ENCODE measurements at regions of chr3 and their contacts with region 1.

Region 1: GRCh38 chr3:30751610-30752299 is 142.7 kb downstream of the GADL1 start:
- DNase-seq: peak in 1 of 2 donors; percentile 73
- ATAC-seq: peak in 2 of 3 donors; percentile 36 to 68
- H3K4me3 ChIP-seq: no peak overlapping the region
- H3K4me3 Mint-ChIP-seq: no peak overlapping the region
- H3K27ac ChIP-seq: no peak overlapping the region
- H3K27ac Mint-ChIP-seq: no peak overlapping the region
- H3K4me1 ChIP-seq: no peaks in the 10 kb centered on the region
- H3K4me1 Mint-ChIP-seq: no peaks in the 10 kb centered on the region
- H3K27me3 ChIP-seq: no peaks in the 10 kb centered on the region
- H3K27me3 Mint-ChIP-seq: no peaks in the 10 kb centered on the region
- CTCF ChIP-seq: peak; percentile 19

Region 2: DNA sequence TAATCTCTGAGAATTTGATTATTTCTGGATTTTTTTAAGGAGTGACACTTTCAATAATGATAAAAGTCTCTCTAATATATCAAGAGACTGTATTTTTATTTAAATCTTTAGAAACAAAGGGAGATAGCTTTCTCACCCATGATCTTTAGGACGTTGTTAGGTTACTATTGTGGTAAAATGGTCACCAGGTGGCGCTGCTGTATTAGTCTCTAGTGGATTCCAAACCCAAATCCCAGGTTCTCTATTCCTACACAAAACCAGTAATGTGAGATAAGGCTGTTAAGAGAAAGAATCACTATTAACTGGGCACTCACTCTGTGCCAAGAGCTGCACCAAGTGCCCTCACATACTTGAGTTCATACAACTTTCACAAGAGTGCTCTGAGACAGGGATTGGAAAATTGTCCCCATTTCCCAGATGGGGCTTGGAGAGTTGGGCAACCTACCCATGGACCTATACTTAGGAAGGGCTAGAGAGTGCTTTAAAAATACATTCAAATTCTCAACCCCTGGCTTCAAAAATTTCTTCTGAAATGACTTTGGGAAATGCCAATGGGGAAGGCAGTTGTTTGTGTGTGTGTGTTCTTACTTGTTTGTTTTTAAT is 738.7 kb before region 1 on chr3:
- intact Hi-C with region 1: loop called (anchors 1 kb)
- DNase-seq: peak; percentile 18 to 69
- ATAC-seq: peak in 1 of 3 donors; percentile 59
- H3K4me3 ChIP-seq: no peak overlapping the region
- H3K4me3 Mint-ChIP-seq: no peak overlapping the region
- H3K27ac ChIP-seq: no peak overlapping the region
- H3K27ac Mint-ChIP-seq: no peak overlapping the region
- H3K4me1 ChIP-seq: no peaks in the 10 kb centered on the region
- H3K4me1 Mint-ChIP-seq: no peaks in the 10 kb centered on the region
- H3K27me3 ChIP-seq: no peaks in the 10 kb centered on the region
- H3K27me3 Mint-ChIP-seq: no peaks in the 10 kb centered on the region
- CTCF ChIP-seq: peak; percentile 74

Region 3: DNA sequence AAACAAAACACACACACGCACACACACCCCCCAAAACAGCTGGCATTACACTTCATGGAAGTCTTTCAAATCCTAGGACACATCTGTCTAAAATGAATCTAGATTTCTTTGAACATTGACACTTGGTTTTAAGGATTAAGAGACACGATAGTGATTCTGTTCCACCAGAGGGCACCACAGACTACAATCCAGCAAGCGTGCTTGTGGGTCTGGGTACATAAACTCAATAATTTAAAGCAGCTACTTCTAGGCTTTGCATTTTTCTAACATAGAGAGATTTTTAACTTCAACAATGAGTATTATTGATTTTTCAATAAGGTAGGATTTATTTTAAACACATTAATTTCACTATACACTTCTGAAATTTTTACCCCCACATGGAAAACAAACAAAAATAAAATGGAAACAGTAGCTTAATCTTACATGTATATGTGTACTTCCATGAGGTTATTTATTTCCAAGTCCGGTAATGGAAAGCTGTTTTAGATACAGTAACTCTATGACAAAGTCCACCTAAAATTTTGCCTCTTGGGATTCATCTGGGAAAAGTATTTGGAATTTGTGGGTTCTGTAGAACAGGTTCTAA is 709.4 kb before region 1 on chr3:
- intact Hi-C with region 1: loop called (anchors 1 kb)
- DNase-seq: peak in 1 of 2 donors; percentile 79
- ATAC-seq: peak in 1 of 3 donors; percentile 57
- H3K4me3 ChIP-seq: no peak overlapping the region
- H3K4me3 Mint-ChIP-seq: no peak overlapping the region
- H3K27ac ChIP-seq: no peak overlapping the region
- H3K27ac Mint-ChIP-seq: no peak overlapping the region
- H3K4me1 ChIP-seq: no peaks in the 10 kb centered on the region
- H3K4me1 Mint-ChIP-seq: no peaks in the 10 kb centered on the region
- H3K27me3 ChIP-seq: no peaks in the 10 kb centered on the region
- H3K27me3 Mint-ChIP-seq: peaks cover 2 to 25% of the 10 kb centered on the region in 2 donors
- CTCF ChIP-seq: peak; percentile 48

Region 4: GRCh38 chr3:30112902-30113484 is 638.8 kb before region 1 on chr3:
- intact Hi-C with region 1: loop called (anchors 10 kb)
- DNase-seq: peak in 1 of 2 donors; percentile 64
- ATAC-seq: no peak
- H3K4me3 ChIP-seq: no peak overlapping the region
- H3K4me3 Mint-ChIP-seq: no peak overlapping the region
- H3K27ac ChIP-seq: no peak overlapping the region
- H3K27ac Mint-ChIP-seq: no peak overlapping the region
- H3K4me1 ChIP-seq: no peaks in the 10 kb centered on the region
- H3K4me1 Mint-ChIP-seq: no peaks in the 10 kb centered on the region
- H3K27me3 ChIP-seq: no peaks in the 10 kb centered on the region
- H3K27me3 Mint-ChIP-seq: peaks cover 0 to 17% of the 10 kb centered on the region in 2 donors
- CTCF ChIP-seq: no peak